ENCODE measurements at regions of chr6 and their contacts with region 1.

Region 1: DNA sequence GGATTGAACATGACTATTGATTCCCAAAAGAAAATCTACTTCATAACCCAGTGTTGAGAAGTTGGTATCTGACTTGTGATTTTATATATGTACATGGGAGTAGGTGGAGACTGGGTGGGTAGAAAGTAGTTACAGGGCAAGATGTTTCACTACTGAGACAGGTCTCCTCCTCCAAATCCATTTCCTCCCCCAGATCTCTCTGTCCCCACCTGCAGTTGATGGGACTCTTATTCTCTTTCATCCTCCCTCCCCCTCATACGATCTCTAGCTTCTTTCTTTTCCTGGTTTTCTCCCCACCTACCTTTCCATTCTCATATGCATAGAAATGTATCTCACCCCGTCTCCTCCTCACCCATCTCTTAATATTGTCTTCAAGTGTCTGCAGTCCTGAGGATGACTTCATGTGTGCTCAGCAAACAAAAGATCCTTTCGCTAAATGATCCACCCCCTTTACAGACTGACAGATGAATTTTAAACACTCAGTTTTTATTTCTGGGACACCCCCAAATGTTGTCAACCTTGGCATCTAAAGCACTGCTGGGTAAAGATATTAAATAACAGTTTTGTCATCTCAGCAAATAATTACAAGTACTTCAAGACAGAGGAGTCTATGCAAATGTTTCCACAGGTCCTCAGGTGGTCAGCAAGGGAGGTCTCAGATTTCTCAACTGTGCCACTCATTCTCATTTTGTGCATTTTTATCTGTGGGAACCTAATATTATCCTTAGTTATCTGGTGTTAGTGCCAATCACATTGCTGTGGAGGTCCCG is 18.7 kb upstream of the HECA start:
- DNase-seq: no peak

Region 2: GRCh38 chr6:139134817-139135581 is 18.8 kb after region 1 on chr6 and contains the start of gene HECA:
- intact Hi-C with region 1: loop called in 1 of 2 experiments (anchors 1 kb)
- DNase-seq: peak; percentile 99
- total RNA-seq, gene HECA: 23.3 to 40.4 TPM